Esophagus muscularis mucosa (tissue), 4 donors: ENCODE measurements at regions of chr2 and their contacts with region 1.

Region 1: GRCh38 chr2:239991689-239992314 is 33.3 kb downstream of the NDUFA10 start:
- DNase-seq: no peak
- H3K4me3 ChIP-seq: peak overlapping the region in 2 of 4 donors; percentile 4 to 7
- H3K27ac ChIP-seq: peak overlapping the region in 3 of 4 donors; percentile 43 to 66 (median 60)
- H3K4me1 ChIP-seq: peaks cover 0 to 16% (median 13%) of the 10 kb centered on the region in 4 donors
- H3K27me3 ChIP-seq: no peaks in the 10 kb centered on the region
- CTCF ChIP-seq: peak; percentile 83 to 86 (median 84)
- EP300 ChIP-seq: no peak
- POLR2A ChIP-seq: no peak

Region 2: DNA sequence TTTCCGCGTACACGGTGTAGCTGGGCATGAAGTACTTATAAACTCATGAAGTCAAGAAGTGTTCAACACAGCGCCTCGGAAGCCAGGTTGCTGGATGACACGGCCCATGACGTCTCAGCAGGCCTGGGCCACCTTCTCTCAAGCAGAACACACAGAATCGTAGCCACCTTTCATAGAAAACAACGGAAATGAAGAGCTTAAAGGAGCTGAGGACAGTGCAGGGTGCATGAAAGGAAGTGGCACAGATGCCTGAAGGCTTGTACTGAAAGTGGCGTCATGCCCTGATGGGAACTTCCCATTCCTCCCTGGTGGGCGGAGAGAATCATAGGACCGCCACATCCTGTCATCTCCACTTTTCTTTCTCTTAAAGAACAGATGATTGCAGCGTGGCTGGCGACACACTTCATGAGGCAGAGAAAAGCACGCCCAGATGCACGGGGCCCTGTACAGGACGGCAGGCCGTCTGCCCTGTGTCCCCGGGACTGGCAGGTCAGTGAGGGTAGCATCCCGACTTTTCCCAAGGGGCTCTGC is 622.1 kb before region 1 on chr2:
- intact Hi-C with region 1: no loop called
- DNase-seq: no peak
- H3K4me3 ChIP-seq: no peak overlapping the region
- H3K27ac ChIP-seq: no peak overlapping the region
- H3K4me1 ChIP-seq: peaks cover 0 to 46% (median 16%) of the 10 kb centered on the region in 4 donors
- H3K27me3 ChIP-seq: no peaks in the 10 kb centered on the region
- CTCF ChIP-seq: no peak
- EP300 ChIP-seq: no peak
- POLR2A ChIP-seq: no peak

Region 3: DNA sequence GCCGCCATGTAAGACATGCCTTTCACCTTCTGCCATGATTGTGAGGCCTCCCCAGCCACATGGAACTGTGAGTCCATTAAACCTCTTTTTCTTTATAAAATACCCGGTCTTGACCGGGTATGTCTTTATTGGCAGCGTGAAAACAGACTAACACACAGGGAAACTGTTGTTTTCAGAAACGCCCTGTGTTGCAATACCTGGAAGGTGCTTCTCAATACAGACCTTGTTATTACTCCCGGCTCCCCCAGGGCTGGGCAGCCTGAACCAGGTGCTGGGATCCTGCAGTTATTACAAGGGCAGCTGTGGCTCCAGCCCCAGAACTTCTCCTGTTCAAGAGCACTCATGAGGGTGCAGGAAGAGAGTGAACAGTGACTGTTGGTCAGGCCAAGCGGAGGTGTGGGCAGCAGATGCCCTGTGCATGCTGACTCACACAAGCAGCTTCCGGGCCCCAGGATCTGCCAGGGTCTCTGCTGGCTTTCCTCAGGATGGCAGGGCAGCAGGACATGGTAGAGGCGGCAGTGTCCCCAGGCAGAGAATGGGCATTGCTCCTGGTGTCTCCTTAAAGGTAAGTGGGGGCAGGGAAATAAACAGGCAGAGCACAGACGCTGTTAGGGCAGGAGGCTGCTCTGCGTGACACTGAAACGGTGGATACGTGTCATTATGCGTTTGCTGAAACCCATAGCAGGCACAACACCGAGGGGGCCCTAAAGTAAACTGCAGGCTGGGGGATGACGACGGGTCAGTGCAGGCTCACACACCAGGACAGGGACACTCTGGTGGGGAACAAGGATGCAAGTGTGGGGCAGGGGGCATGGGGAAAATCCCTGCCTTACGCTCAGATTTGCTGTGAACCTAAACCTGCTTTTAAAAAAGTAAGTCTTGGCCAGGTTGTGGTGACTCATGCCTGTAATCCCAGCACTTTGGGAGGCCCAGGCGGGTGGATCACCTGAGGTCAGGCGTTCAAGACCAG is 55.7 kb before region 1 on chr2:
- intact Hi-C with region 1: loop called (anchors 2 kb)
- DNase-seq: no peak
- H3K4me3 ChIP-seq: no peak overlapping the region
- H3K27ac ChIP-seq: no peak overlapping the region
- H3K4me1 ChIP-seq: peaks cover 3 to 9% (median 5%) of the 10 kb centered on the region in 4 donors
- H3K27me3 ChIP-seq: no peaks in the 10 kb centered on the region
- CTCF ChIP-seq: no peak
- EP300 ChIP-seq: no peak
- POLR2A ChIP-seq: no peak